Vagina (tissue), 2 donors: ENCODE measurements at regions of chr13 and their contacts with region 1.

Region 1: GRCh38 chr13:20891768-20892167 is 10.8 kb downstream of the XPO4 start:
- DNase-seq: no peak
- H3K4me3 ChIP-seq: no peak overlapping the region
- H3K27ac ChIP-seq: no peak overlapping the region
- H3K4me1 ChIP-seq: peaks cover 1% of the 10 kb centered on the region
- H3K27me3 ChIP-seq: no peaks in the 10 kb centered on the region
- CTCF ChIP-seq: no peak
- POLR2A ChIP-seq: no peak

Region 2: DNA sequence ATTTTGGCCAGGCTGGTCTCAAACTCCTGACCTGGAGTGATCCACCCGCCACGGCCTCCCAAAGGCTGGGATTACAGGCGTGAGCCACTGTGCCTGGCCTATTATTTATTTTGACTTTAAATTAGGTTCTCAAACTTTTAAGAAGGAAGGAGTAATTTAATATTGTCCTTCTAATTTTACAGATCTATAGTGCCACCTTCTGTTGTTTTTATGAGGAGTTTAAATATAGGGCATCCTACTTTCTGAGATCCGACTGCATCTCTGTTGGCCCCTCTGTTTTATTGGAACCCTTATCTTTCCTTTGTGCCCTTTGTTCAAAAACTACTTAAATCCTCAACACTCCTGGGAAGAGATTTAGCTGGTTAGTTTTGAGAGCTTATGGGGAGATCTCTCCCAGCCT is 1003.0 kb before region 1 on chr13:
- intact Hi-C with region 1: loop called (anchors 10 kb)
- DNase-seq: no peak
- H3K4me3 ChIP-seq: no peak overlapping the region
- H3K27ac ChIP-seq: no peak overlapping the region
- H3K4me1 ChIP-seq: no peaks in the 10 kb centered on the region
- H3K27me3 ChIP-seq: no peaks in the 10 kb centered on the region
- CTCF ChIP-seq: no peak
- POLR2A ChIP-seq: no peak

Region 3: DNA sequence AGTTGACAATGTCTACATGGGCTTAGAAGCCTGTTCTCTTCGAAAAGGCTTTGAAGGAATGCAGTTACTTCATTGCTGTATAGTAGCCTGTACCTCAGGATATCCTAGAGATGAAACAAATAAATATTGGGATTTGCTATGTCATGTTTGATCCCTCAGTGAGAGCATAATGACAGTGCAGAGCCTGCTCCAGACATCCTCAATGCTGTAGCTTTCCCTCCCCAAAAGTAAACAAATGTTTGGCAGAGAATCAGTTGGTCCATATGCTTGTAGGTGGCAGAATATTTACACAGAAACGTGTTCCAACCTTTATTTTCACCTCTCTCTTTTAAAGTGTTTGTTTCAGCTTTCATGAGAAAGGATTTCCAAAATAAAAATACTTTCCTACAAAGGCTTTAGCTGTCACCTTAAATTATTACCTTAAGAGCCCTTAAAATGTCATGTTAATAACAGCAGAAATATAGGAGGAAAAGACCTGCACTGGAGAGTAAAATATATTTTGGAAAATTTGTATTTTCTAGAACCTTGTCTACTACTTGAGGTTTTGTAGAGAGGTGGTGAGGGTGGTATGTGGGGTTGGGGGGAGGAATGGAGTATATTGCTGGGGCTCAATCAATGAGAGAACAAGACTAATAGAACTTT is 1773.9 kb after region 1 on chr13:
- intact Hi-C with region 1: no loop called
- DNase-seq: no peak
- H3K4me3 ChIP-seq: no peak overlapping the region
- H3K27ac ChIP-seq: no peak overlapping the region
- H3K4me1 ChIP-seq: no peaks in the 10 kb centered on the region
- H3K27me3 ChIP-seq: no peaks in the 10 kb centered on the region
- CTCF ChIP-seq: no peak
- POLR2A ChIP-seq: no peak